Panc1 (cell line): ENCODE measurements at regions of chr16 and their contacts with region 1.

Region 1: GRCh38 chr16:71358464-71358998 is at the start of gene CALB2:
- DNase-seq: no peak
- ATAC-seq: peak; percentile 95
- H3K4me3 ChIP-seq: peak within 1 kb of the TSS; percentile 14 to 45
- H3K27ac ChIP-seq: no peak within 1 kb of the TSS
- H3K4me1 ChIP-seq: no peaks in the 10 kb centered on the region; the same call in 1 of the 2 replicates
- H3K27me3 ChIP-seq: no peaks in the 10 kb centered on the region
- CTCF ChIP-seq: peak; percentile 97
- total RNA-seq, gene CALB2: 0.59 TPM

Region 2: DNA sequence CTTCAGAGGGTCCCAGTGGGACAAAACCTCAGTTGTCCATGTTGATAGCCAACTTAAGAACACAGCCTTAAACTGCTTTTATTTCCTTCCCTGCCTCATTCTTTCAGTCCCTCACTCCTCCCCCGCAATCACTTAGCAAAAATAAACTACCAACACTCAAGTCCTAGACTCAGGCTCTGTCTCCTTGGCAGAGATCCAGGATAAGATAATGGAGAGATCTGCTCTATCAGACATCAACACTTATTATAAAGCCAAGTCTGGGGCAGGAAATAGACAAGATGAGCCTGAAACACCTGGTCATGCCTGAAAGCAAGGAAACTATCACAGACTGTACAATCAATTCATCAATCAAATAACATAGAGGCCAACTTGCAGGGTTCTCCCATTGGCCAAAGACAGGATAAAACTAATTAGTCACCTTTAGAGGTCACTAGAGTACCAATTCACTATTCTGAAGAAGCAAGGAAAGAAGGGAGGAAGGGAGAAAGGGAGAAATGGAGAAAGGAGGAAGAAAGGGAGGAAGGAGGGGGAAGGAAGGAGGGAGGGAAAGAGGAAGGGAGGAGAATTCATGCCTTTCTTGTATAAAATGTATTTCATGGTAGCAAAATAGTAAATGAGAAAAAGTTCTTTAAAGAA is 143.7 kb before region 1 on chr16:
- CTCF ChIA-PET with region 1: no interaction called
- POLR2A ChIA-PET with region 1: no interaction called
- in situ Hi-C with region 1: no loop called
- intact Hi-C with region 1: loop called (anchors 10 kb)
- DNase-seq: no peak
- ATAC-seq: no peak
- H3K4me3 ChIP-seq: no peak overlapping the region
- H3K27ac ChIP-seq: no peak overlapping the region
- H3K4me1 ChIP-seq: no peaks in the 10 kb centered on the region
- H3K27me3 ChIP-seq: no peaks in the 10 kb centered on the region
- CTCF ChIP-seq: peak; percentile 17; the same call in 1 of the 2 replicates